ENCODE measurements at regions of chr7 and their contacts with region 1.

Region 1: GRCh38 chr7:66859794-66860645 is 61.0 kb upstream of the TMEM248 start:
- DNase-seq: peak in 1 of 2 donors; percentile 80
- ATAC-seq: peak; percentile 98 to 99 (median 99)
- H3K4me3 ChIP-seq: peak overlapping the region; percentile 35
- H3K27ac ChIP-seq: peak overlapping the region; percentile 87
- H3K4me1 ChIP-seq: peaks cover 19% of the 10 kb centered on the region
- H3K27me3 ChIP-seq: no peaks in the 10 kb centered on the region
- CTCF ChIP-seq: no peak

Region 2: GRCh38 chr7:66920769-66921395 is 60.9 kb after region 1 on chr7 and contains the start of gene TMEM248:
- intact Hi-C with region 1: loop called in 1 of 2 experiments (anchors 5 kb)
- DNase-seq: peak; percentile 96
- ATAC-seq: peak; percentile 94 to 98 (median 98)
- H3K4me3 ChIP-seq: peak within 1 kb of the TSS; percentile 83
- H3K27ac ChIP-seq: peak within 1 kb of the TSS; percentile 84
- H3K4me1 ChIP-seq: peaks cover 44% of the 10 kb centered on the region
- H3K27me3 ChIP-seq: no peaks in the 10 kb centered on the region
- CTCF ChIP-seq: no peak
- total RNA-seq, gene TMEM248: 33.9 to 38.6 (median 37.0) TPM

Region 3: GRCh38 chr7:67371429-67372305 is 511.6 kb after region 1 on chr7:
- intact Hi-C with region 1: no loop called
- DNase-seq: peak; percentile 26 to 59
- ATAC-seq: peak; percentile 74 to 89 (median 78)
- H3K4me3 ChIP-seq: no peak overlapping the region
- H3K27ac ChIP-seq: no peak overlapping the region
- H3K4me1 ChIP-seq: no peaks in the 10 kb centered on the region
- H3K27me3 ChIP-seq: no peaks in the 10 kb centered on the region
- CTCF ChIP-seq: peak; percentile 82

Region 4: GRCh38 chr7:67462781-67463191 is 602.8 kb after region 1 on chr7:
- intact Hi-C with region 1: no loop called
- DNase-seq: no peak
- ATAC-seq: no peak
- H3K4me3 ChIP-seq: no peak overlapping the region
- H3K27ac ChIP-seq: no peak overlapping the region
- H3K4me1 ChIP-seq: no peaks in the 10 kb centered on the region
- H3K27me3 ChIP-seq: peaks cover 0 to 5% (median 0%) of the 10 kb centered on the region in 3 donors
- CTCF ChIP-seq: no peak